Gastrocnemius medialis (tissue), 4 donors: ENCODE measurements at regions of chr17 and their contacts with region 1.

Region 1: GRCh38 chr17:44210342-44211192 is 8.9 kb downstream of the UBTF start:
- DNase-seq: peak; percentile 64 to 87
- ATAC-seq: peak; percentile 90 to 92
- H3K4me3 ChIP-seq: peak overlapping the region in 1 of 4 donors; percentile 34
- H3K27ac ChIP-seq: peak overlapping the region; percentile 50 to 80 (median 60)
- H3K4me1 ChIP-seq: peaks cover 26 to 39% of the 10 kb centered on the region in 2 donors
- H3K27me3 ChIP-seq: no peaks in the 10 kb centered on the region
- CTCF ChIP-seq: peak; percentile 99 to 100 (median 99)
- POLR2A ChIP-seq: peak in 1 of 2 donors; percentile 25

Region 2: GRCh38 chr17:43974382-43975266 is 235.9 kb before region 1 on chr17:
- in situ Hi-C with region 1: no loop called
- intact Hi-C with region 1: no loop called
- DNase-seq: no peak
- ATAC-seq: no peak
- H3K4me3 ChIP-seq: no peak overlapping the region
- H3K27ac ChIP-seq: no peak overlapping the region
- H3K4me1 ChIP-seq: no peaks in the 10 kb centered on the region
- H3K27me3 ChIP-seq: peaks cover 0 to 16% (median 10%) of the 10 kb centered on the region in 3 donors
- CTCF ChIP-seq: no peak
- POLR2A ChIP-seq: no peak

Region 3: GRCh38 chr17:44044067-44044466 is 166.5 kb before region 1 on chr17:
- in situ Hi-C with region 1: no loop called
- intact Hi-C with region 1: no loop called
- DNase-seq: no peak
- ATAC-seq: no peak
- H3K4me3 ChIP-seq: no peak overlapping the region
- H3K27ac ChIP-seq: peak overlapping the region in 3 of 4 donors; percentile 31 to 40 (median 40)
- H3K4me1 ChIP-seq: peaks cover 27 to 30% of the 10 kb centered on the region in 2 donors
- H3K27me3 ChIP-seq: no peaks in the 10 kb centered on the region
- CTCF ChIP-seq: no peak
- POLR2A ChIP-seq: no peak

Region 4: GRCh38 chr17:44331249-44331760 is 120.7 kb after region 1 on chr17:
- in situ Hi-C with region 1: loop called in 2 of 4 experiments (anchors 5 to 10 kb)
- intact Hi-C with region 1: loop called (anchors 1 kb)
- DNase-seq: peak; percentile 56 to 78
- ATAC-seq: peak; percentile 57 to 72
- H3K4me3 ChIP-seq: no peak overlapping the region
- H3K27ac ChIP-seq: peak overlapping the region; percentile 29 to 60 (median 47)
- H3K4me1 ChIP-seq: peaks cover 4 to 5% of the 10 kb centered on the region in 2 donors
- H3K27me3 ChIP-seq: no peaks in the 10 kb centered on the region
- CTCF ChIP-seq: peak; percentile 83 to 88 (median 85)
- POLR2A ChIP-seq: no peak